ENCODE measurements at regions of chr5 and their contacts with region 1.

Region 1: GRCh38 chr5:80093796-80094195 is 58.6 kb downstream of the THBS4 start:
- DNase-seq: no peak
- H3K4me3 ChIP-seq: no peak overlapping the region
- H3K27ac ChIP-seq: no peak overlapping the region
- H3K4me1 ChIP-seq: no peaks in the 10 kb centered on the region
- H3K27me3 ChIP-seq: no peaks in the 10 kb centered on the region
- CTCF ChIP-seq: no peak

Region 2: GRCh38 chr5:80139466-80139972 is 45.7 kb after region 1 on chr5:
- CTCF ChIA-PET with region 1: no interaction called
- dilution Hi-C with region 1: loop called (anchors 5 kb)
- in situ Hi-C with region 1: no loop called
- intact Hi-C with region 1: no loop called
- DNase-seq: no peak
- H3K4me3 ChIP-seq: no peak overlapping the region
- H3K27ac ChIP-seq: no peak overlapping the region
- H3K4me1 ChIP-seq: no peaks in the 10 kb centered on the region
- H3K27me3 ChIP-seq: no peaks in the 10 kb centered on the region
- CTCF ChIP-seq: no peak

Region 3: DNA sequence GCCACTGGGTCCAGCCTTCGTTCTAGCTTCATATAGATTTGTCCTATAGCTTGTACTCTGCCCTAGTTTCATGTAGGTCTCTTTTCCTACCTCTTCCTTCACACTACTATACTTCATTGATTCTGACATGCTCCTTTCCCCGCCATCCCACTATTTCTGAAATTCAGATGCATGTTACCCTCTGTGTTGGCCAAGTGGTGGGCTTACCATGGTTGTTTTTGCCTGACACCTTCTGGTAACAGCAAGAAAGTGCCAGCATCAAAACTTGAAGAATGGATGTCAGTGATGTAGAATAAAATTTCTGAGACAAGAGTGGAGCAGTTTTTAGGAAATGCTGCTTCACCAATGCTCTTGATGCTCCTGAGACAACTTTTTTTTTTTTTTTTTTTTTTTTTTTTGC is 181.6 kb after region 1 on chr5:
- CTCF ChIA-PET with region 1: no interaction called
- dilution Hi-C with region 1: no loop called
- in situ Hi-C with region 1: no loop called
- intact Hi-C with region 1: loop called (anchors 1 kb)
- DNase-seq: no peak
- H3K4me3 ChIP-seq: no peak overlapping the region
- H3K27ac ChIP-seq: no peak overlapping the region
- H3K4me1 ChIP-seq: no peaks in the 10 kb centered on the region
- H3K27me3 ChIP-seq: no peaks in the 10 kb centered on the region
- CTCF ChIP-seq: peak; percentile 21 to 49

Region 4: GRCh38 chr5:80308526-80308925 is 214.7 kb after region 1 on chr5:
- CTCF ChIA-PET with region 1: interaction called, 5 read pairs
- dilution Hi-C with region 1: no loop called
- in situ Hi-C with region 1: loop called (anchors 5 kb)
- intact Hi-C with region 1: loop called (anchors 1 kb)
- DNase-seq: no peak
- H3K4me3 ChIP-seq: no peak overlapping the region
- H3K27ac ChIP-seq: no peak overlapping the region
- H3K4me1 ChIP-seq: no peaks in the 10 kb centered on the region
- H3K27me3 ChIP-seq: no peaks in the 10 kb centered on the region
- CTCF ChIP-seq: no peak

Region 5: GRCh38 chr5:81194633-81195333 is 1101.0 kb after region 1 on chr5:
- CTCF ChIA-PET with region 1: no interaction called
- dilution Hi-C with region 1: no loop called
- in situ Hi-C with region 1: no loop called
- intact Hi-C with region 1: loop called (anchors 10 kb)
- DNase-seq: peak; percentile 56
- H3K4me3 ChIP-seq: peak overlapping the region in 2 of 3 experiments; percentile 8 to 21
- H3K27ac ChIP-seq: no peak overlapping the region
- H3K4me1 ChIP-seq: no peaks in the 10 kb centered on the region
- H3K27me3 ChIP-seq: peaks cover 2% of the 10 kb centered on the region
- CTCF ChIP-seq: peak; percentile 78 to 96